Activated T-helper 1 cell treated with anti-CD3 and anti-CD28 coated beads, Interleukin-12 subunit alpha, Interleukin-12 subunit beta, Interleukin-2, Interleukin-4 antibody, amounts not matched to agents 30 ng/mL and 10 ng/mL and 1 ng/mL, durations not matched to agents 14 hours and 24 hours and 36 hours (primary cell): ENCODE measurements at regions of chr3 and their contacts with region 1.

Region 1: DNA sequence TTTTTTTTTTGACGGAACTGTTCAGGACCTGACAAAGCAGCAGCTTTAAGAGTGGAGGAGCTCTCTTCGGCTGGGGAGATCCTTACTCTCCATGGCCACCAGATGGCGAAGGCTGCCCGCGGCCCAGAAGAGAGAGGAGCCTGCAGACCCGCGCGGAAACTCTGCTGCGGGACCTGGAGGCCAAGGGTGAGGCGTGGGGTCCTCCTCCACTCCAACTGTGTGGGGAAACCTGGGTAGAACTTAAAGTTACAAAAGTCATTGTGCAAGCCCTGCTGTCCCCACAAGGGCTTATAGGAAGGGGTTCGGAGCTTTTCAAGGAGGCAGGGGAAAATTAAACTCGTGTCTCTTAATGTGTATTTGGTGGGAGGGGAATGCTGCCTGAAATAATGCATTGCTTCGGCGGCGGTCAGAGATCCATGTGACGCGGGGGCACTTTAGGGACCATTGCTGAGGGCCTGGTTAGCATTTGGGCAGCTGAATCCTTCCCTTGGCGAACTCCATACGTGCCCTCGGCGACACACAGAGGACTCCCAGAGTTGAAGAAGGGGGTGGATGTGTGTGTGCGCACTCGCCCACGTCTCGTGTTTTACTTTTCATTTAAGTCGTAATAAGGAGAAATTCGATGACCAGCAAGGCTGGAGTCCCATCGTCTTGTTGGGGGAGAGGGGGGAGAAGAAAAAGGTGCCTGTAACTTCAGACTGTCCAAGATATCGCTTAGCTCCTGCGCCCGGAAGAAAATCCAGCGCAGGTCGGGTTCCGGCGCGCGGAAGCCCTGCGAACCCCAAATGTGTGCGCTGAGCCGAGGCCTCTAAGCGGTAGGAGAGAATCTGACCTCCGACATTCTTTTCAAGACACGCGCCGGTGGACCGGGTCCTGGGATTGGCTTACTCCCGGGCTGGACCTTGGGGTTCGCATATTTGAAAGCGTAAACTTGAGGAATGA is 9.7 kb downstream of the EOMES start:
- DNase-seq: peak; percentile 75
- H3K4me3 Mint-ChIP-seq: peak overlapping the region; percentile 90
- H3K27ac Mint-ChIP-seq: peak overlapping the region; percentile 91
- H3K4me1 Mint-ChIP-seq: peaks cover 32% of the 10 kb centered on the region
- H3K27me3 Mint-ChIP-seq: peaks cover 45% of the 10 kb centered on the region

Region 2: DNA sequence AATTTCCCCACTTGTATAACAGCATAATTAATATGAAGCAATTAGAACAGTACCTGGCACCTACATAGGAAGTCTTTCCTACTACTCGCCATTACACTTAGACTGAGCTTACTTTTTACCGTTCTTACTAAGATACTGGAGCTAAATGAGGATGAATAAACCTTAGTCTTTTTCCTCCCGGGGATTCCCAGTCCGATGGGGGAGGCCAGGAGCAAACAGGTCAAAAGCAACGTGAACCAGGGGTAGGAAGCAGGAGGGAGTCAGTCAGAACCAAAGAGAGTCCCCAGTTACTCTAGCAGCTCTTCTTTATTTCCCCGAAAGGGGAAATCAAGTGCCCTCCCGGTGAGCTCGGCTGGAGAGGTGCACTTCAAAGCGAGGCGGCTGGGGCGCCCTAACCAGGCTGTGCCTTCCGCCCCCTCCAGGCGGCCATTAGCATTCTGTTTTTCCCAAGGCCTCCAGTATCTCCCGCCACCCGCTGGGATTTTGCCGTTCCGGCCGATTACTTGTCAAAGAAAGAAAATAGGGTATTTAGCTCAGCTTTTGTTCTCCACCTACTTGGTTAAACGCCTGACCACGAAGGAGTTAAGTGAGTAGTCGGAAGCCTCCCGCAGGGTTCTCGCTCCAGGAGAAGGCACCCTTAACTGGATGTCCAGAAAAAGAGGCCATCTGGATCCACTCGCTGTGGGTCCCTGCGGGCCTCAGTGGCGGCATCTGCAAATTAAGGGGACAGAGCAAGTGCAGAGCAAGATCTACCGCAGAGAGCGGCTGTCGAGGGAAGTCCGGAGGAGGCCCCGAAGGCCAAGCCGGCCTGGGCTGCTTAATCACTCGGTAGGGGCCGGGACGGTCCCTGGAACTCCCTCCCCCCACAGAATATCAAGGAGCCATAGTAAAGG is 16.0 kb after region 1 on chr3:
- intact Hi-C with region 1: loop called (anchors 1 kb)
- DNase-seq: no peak
- H3K4me3 Mint-ChIP-seq: peak overlapping the region; percentile 17
- H3K27ac Mint-ChIP-seq: peak overlapping the region; percentile 67
- H3K4me1 Mint-ChIP-seq: peaks cover 52% of the 10 kb centered on the region
- H3K27me3 Mint-ChIP-seq: peaks cover 87% of the 10 kb centered on the region

Region 3: DNA sequence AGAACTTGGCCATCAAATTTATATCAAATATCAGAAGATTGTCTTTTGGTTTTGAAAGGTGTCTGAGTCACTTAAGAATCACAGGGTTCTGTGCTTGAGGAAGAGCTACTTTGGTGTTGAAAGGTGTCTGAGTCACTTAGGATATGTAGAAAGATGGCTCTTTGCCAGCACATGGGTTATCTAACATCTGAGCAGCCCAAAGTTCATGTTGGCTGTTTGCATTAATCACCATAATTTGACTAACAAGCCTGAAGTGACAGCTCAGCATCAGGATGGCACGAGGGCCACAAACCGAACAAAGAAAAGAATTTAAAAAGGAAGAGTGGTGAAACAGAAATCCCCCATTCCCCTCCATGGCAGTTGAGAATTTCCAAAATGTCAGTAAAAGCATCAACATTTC is 338.5 kb after region 1 on chr3:
- intact Hi-C with region 1: loop called (anchors 2 kb)
- DNase-seq: no peak
- H3K4me3 Mint-ChIP-seq: no peak overlapping the region
- H3K27ac Mint-ChIP-seq: peak overlapping the region; percentile 18
- H3K4me1 Mint-ChIP-seq: peaks cover 12% of the 10 kb centered on the region
- H3K27me3 Mint-ChIP-seq: no peaks in the 10 kb centered on the region

Region 4: GRCh38 chr3:28241221-28242160 is 529.1 kb after region 1 on chr3 and contains the start of gene CMC1:
- intact Hi-C with region 1: loop called (anchors 2 kb)
- DNase-seq: peak; percentile 87
- H3K4me3 Mint-ChIP-seq: peak within 1 kb of the TSS; percentile 94
- H3K27ac Mint-ChIP-seq: peak within 1 kb of the TSS; percentile 96
- H3K4me1 Mint-ChIP-seq: peaks cover 37% of the 10 kb centered on the region
- H3K27me3 Mint-ChIP-seq: no peaks in the 10 kb centered on the region
- total RNA-seq, gene CMC1: 29.5 and 32.5 TPM in 2 replicates

Region 5: DNA sequence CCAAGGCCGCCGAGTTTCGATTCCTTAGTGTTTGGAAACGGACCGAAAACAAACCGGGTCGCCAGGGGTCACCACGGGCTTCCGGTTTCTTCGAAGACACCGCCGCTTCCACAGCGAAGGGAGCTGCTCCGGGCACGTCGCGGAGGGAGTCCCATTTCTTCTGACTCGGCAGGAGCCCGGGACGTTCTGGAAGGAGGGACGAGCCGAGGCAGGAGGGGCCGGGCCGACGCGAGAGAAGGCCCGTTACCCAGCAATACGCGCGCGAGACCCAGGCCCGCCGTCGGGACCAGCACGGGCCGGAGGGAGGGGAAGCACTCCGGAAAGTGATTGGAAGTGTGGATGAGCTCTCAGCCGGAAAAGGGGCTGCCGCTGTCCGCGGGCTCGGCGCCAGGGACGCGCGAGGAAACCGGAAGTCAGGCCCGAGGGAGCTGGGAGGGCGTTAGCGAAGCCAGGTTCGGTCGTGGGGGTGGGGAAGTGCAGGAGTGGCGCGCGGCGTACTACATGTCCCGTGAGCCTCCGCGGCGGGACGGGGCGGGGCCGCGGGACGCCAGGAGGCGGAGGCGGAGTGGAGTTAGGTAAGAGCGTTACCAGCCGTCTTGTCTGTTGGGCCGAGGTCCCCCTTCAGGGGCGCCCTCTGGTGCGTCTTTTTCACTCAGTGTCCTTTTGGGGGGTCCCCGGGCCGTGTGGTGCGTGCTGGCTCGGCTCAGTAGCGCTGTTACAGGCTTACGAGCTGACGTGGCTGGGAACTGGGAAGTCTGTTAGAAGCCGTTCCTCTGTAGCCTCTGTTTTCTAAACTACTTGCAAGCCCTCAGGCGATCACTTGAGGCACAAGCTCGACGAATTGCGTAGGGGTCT is 636.4 kb after region 1 on chr3 and contains the starts of genes AZI2 and ZCWPW2:
- intact Hi-C with region 1: loop called (anchors 1 kb)
- DNase-seq: peak; percentile 90
- H3K4me3 Mint-ChIP-seq: peak within 1 kb of the TSS; percentile 98
- H3K27ac Mint-ChIP-seq: peak within 1 kb of the TSS; percentile 98
- H3K4me1 Mint-ChIP-seq: peaks cover 66% of the 10 kb centered on the region
- H3K27me3 Mint-ChIP-seq: no peaks in the 10 kb centered on the region
- total RNA-seq, gene AZI2: 43.7 and 44.8 TPM in 2 replicates
- total RNA-seq, gene ZCWPW2: 0.24 TPM in 1 of 2 replicates, not detected in the other

Region 6: GRCh38 chr3:28667646-28668621 is 955.5 kb after region 1 on chr3:
- intact Hi-C with region 1: loop called (anchors 2 kb)
- DNase-seq: peak; percentile 18
- H3K4me3 Mint-ChIP-seq: no peak overlapping the region
- H3K27ac Mint-ChIP-seq: no peak overlapping the region
- H3K4me1 Mint-ChIP-seq: peaks cover 6% of the 10 kb centered on the region
- H3K27me3 Mint-ChIP-seq: peaks cover 6% of the 10 kb centered on the region